Ascending aorta (tissue), 2 donors: ENCODE measurements at regions of chr9 and their contacts with region 1.

Region 1: DNA sequence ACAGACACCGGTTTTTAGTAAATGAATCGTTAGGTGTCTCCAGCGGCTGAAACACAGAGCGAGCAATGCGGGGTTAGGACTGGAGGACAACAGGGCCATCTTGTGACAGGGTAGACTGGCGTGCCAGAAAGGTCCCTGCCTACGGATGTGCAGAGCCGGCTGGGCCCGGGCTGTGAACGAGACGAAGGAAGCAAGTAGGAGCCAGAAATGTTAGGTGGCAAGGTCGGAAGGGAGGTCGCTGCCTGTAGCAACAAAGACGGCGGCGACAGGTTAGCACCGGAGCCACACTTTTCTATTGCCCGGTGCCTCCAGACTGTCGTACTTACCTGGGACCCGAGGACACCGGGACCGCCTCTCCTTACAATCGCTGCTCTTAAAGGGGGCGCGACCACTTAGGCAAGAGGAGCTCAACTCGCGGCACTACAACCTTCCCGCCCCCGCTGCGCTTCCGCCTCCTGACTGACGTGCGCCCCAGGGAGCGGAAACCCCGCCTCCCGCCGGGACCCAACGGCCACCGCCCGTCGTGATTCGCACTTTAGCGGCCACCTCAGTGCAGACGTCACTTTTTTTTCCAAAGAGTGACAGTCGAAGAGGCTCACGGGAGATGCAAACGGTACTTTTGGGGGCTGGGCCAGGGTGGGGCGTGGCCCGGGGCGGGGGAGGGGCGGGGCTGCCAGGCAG is at the start of gene INIP:
- DNase-seq: peak; percentile 87 to 97
- H3K4me3 ChIP-seq: peak within 1 kb of the TSS; percentile 83
- H3K27ac ChIP-seq: peak within 1 kb of the TSS; percentile 83 to 85
- H3K4me1 ChIP-seq: peaks cover 0 to 8% of the 10 kb centered on the region in 2 donors
- H3K27me3 ChIP-seq: no peaks in the 10 kb centered on the region
- CTCF ChIP-seq: no peak
- total RNA-seq, gene INIP: 37.8 TPM

Region 2: DNA sequence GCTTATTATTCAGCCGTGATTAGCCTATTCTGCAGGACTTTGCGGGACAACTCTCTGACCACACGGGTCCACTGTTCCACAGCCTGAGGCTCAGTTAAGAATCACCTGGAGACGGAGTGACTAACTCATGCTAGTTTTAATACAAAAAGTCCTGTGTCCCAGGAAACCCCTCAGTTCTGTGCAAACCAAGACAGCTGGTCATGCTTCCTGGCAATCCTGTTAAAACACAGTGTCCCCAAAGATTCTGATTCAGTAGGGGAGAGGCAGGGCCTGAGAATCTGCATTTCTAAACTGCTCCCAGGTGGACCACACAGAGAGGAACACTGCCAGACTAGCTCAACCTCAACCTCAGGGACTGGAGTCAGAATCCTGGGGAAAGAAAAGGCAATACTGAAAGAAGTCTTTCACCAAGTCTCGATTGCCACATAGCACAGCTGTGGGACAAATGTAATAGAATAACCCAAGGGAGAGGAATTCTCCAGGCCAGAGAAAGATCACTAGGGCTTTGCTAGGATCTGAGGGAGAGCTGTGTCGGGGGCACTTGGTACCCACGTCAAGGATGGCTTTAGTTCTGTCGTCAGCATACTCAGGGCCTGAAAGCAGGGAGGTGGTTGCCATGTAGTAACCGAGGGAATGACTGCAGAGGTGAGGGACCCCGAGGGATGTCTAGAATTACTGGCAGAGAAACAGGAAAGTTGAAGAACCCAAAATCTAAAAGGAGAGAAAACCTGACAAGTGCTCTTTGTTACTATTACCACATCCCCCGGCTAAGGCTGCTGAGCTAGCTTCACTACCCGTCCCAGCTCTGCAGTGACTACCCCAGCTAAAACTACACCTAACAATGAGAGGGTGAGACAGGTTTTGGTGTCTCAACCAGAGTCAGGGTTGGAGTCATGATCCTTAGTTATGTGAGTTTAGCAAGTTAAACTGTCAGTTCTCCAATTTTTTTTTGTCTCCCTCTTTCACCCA is 551.3 kb before region 1 on chr9:
- intact Hi-C with region 1: loop called (anchors 5 kb)
- DNase-seq: no peak
- H3K4me3 ChIP-seq: no peak overlapping the region
- H3K27ac ChIP-seq: peak overlapping the region; percentile 13 to 20
- H3K4me1 ChIP-seq: no peaks in the 10 kb centered on the region
- H3K27me3 ChIP-seq: no peaks in the 10 kb centered on the region
- CTCF ChIP-seq: peak; percentile 9 to 58 (median 42)

Region 3: DNA sequence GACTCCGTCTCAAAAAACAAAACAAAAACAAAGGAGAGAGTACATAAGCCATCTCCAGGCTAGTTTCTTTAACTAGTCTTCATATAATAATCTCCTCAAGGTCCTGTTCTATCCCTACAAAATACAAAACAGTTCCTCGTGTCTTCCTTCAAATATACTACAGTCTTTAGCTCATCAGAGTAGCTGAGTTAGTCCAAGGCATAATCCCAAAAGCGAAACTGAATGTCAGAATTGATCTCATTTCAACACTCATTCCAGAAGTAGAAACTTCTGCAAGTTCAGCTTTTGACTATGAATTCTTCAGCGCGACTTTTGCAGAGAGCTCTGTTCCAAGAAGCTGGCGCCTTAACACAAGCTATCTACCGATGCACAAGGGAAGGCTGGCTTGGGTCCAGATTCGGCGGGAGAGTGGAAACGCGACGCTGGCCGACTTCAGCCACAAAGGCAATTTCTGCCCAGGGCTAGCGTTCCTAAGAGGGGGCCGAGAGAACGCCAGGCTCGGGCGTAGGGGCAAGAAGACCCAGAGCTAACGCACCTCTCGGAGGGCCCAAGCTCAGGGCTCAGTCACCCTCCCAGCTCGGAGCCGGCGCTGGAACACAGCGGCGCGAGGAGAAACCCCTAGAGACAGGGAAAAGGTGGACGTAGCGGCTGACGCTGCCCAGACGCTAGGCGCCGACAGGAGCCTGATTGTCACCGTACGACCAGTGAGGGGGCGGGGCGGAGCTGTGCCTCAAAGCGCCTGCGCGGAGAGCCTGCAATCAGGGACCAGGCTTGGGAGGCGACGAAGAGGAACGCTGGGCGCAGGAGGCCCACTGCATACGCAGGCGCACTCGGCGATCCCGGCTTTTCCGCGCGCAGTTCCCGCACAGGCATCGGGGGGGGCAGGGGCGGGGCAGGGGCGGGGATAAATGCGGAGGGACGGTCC is 338.4 kb before region 1 on chr9:
- intact Hi-C with region 1: loop called (anchors 2 kb)
- DNase-seq: peak; percentile 97 to 100
- H3K4me3 ChIP-seq: peak overlapping the region; percentile 89 to 94
- H3K27ac ChIP-seq: peak overlapping the region; percentile 92 to 98
- H3K4me1 ChIP-seq: peaks cover 0 to 30% of the 10 kb centered on the region in 2 donors
- H3K27me3 ChIP-seq: no peaks in the 10 kb centered on the region
- CTCF ChIP-seq: no peak

Region 4: GRCh38 chr9:112750111-112750767 is 32.4 kb after region 1 on chr9 and contains the start of gene SNX30:
- intact Hi-C with region 1: loop called (anchors 1 kb)
- DNase-seq: peak; percentile 70 to 95
- H3K4me3 ChIP-seq: peak within 1 kb of the TSS; percentile 84 to 98
- H3K27ac ChIP-seq: peak within 1 kb of the TSS; percentile 92 to 93
- H3K4me1 ChIP-seq: peaks cover 14 to 38% of the 10 kb centered on the region in 2 donors
- H3K27me3 ChIP-seq: no peaks in the 10 kb centered on the region
- CTCF ChIP-seq: no peak
- total RNA-seq, gene SNX30: 4.7 TPM

Region 5: GRCh38 chr9:112819635-112820496 is 102.1 kb after region 1 on chr9:
- intact Hi-C with region 1: loop called (anchors 1 kb)
- DNase-seq: peak in 1 of 2 donors; percentile 82
- H3K4me3 ChIP-seq: no peak overlapping the region
- H3K27ac ChIP-seq: peak overlapping the region in 1 of 2 donors; percentile 19
- H3K4me1 ChIP-seq: peaks cover 0 to 8% of the 10 kb centered on the region in 2 donors
- H3K27me3 ChIP-seq: no peaks in the 10 kb centered on the region
- CTCF ChIP-seq: peak; percentile 50 to 72 (median 53)